A549 (cell line): ENCODE measurements at regions of chr5 and their contacts with region 1.

Region 1: GRCh38 chr5:73792687-73793320 is 166.8 kb downstream of the ARHGEF28 start:
- DNase-seq: peak; percentile 43 to 81
- ATAC-seq: peak; percentile 54 to 73
- H3K4me3 ChIP-seq: no peak overlapping the region
- H3K27ac ChIP-seq: peak overlapping the region; percentile 91 to 94; a peak in 5 of 6 replicates
- H3K4me1 ChIP-seq: peaks cover 73% of the 10 kb centered on the region
- CTCF ChIP-seq: peak; percentile 97
- EP300 ChIP-seq: no peak
- POLR2A ChIP-seq: no peak
- RAD21 ChIP-seq: peak; percentile 99

Region 2: GRCh38 chr5:73519531-73520283 is 273.1 kb before region 1 on chr5:
- CTCF ChIA-PET with region 1: interaction called, 12 read pairs
- POLR2A ChIA-PET with region 1: no interaction called
- DNase-seq: peak; percentile 86 to 93
- ATAC-seq: peak; percentile 99 to 100
- H3K4me3 ChIP-seq: no peak overlapping the region
- H3K27ac ChIP-seq: 0 out of 6 replicates have a peak overlapping the region, but pooled peaks of 1 of the 2 experiments have one; percentile 10
- H3K4me1 ChIP-seq: no peaks in the 10 kb centered on the region; the same call in 2 of the 3 replicates
- CTCF ChIP-seq: peak; percentile 81
- EP300 ChIP-seq: no peak
- POLR2A ChIP-seq: no peak
- RAD21 ChIP-seq: peak; percentile 87 to 93

Region 3: GRCh38 chr5:73558950-73559349 is 233.9 kb before region 1 on chr5:
- CTCF ChIA-PET with region 1: interaction called, 13 read pairs
- POLR2A ChIA-PET with region 1: no interaction called
- DNase-seq: peak; percentile 47 to 51
- ATAC-seq: peak; percentile 79 to 83; a peak in 4 of 6 replicates
- H3K4me3 ChIP-seq: no peak overlapping the region
- H3K27ac ChIP-seq: no peak overlapping the region
- H3K4me1 ChIP-seq: peaks cover 2% of the 10 kb centered on the region; the same call in 1 of the 3 replicates
- CTCF ChIP-seq: peak; percentile 24; the same call in 2 of the 3 replicates
- EP300 ChIP-seq: no peak
- POLR2A ChIP-seq: no peak
- RAD21 ChIP-seq: peak; percentile 33 to 49; a peak in 3 of 5 replicates

Region 4: DNA sequence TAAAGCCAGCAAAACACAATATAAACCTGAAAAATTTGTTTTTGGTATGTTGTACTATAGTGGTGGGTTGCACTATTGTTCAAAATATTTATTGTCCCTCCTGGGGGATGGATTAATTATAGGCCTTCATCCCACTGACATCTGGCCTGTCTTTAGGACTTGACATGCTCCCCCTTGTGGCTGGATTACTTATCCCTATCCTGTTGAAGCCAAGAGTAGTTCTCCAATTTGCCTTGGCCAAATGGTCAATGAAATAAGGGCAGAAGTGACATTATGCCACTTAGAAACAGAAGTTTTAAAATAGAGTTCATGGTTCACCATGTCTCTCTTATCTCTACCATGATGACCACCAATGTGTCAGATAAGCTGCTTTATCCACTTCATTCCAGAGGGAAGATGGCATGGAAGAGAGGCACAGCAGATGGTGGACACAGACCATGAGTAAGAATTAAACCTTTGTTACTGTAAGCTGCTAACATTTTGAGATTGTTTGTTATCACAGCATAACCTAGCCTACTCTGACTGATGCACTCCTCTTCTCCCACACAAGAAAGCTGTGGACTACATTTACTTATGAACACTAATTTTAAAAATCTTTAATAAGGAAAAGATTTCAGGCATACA is 196.0 kb before region 1 on chr5:
- CTCF ChIA-PET with region 1: interaction called, 315 read pairs
- POLR2A ChIA-PET with region 1: interaction called, 5 read pairs
- DNase-seq: peak; percentile 40 to 78
- ATAC-seq: peak; percentile 80 to 92; a peak in 5 of 6 replicates
- H3K4me3 ChIP-seq: no peak overlapping the region
- H3K27ac ChIP-seq: no peak overlapping the region
- H3K4me1 ChIP-seq: peaks cover 23% of the 10 kb centered on the region
- CTCF ChIP-seq: peak; percentile 68
- EP300 ChIP-seq: no peak
- POLR2A ChIP-seq: no peak
- RAD21 ChIP-seq: peak; percentile 41 to 53; a peak in 4 of 5 replicates

Region 5: DNA sequence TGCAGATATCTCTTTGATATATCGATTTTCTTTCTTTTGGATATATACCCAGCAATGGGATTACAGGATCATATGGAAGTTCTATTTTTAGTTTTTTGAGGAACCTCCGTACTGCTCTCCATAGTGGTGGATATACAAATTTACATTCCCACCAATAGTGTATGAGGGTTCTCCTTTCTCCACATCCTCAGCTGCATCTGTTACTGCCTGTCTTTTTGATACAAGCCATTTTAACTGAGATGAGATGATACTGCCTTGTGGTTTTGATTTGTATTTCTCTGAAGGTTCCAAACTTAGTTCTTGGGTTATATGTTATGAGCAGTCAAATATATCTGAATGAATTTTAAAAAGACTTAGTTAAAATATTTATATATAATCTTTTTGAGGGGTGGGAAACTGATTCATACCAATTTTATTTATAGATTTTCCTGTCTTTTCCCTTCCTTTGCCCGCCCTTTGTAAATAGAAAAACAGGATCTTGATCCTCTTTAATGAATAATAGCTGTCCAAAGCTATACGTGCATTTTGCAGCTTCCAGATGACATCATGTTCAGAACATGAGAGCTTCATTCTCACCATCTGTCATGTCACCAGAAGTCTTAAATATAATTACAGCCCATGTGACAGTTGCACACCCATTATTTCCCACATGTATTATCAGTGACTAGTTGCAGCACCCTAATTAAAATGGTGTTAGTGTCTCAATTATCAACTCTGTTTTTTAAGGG is 173.0 kb before region 1 on chr5:
- CTCF ChIA-PET with region 1: interaction called, 10 read pairs
- POLR2A ChIA-PET with region 1: no interaction called
- DNase-seq: no peak
- ATAC-seq: no peak
- H3K4me3 ChIP-seq: no peak overlapping the region
- H3K27ac ChIP-seq: no peak overlapping the region
- H3K4me1 ChIP-seq: peaks cover 43% of the 10 kb centered on the region
- CTCF ChIP-seq: no peak
- EP300 ChIP-seq: no peak
- POLR2A ChIP-seq: no peak
- RAD21 ChIP-seq: no peak

Region 6: DNA sequence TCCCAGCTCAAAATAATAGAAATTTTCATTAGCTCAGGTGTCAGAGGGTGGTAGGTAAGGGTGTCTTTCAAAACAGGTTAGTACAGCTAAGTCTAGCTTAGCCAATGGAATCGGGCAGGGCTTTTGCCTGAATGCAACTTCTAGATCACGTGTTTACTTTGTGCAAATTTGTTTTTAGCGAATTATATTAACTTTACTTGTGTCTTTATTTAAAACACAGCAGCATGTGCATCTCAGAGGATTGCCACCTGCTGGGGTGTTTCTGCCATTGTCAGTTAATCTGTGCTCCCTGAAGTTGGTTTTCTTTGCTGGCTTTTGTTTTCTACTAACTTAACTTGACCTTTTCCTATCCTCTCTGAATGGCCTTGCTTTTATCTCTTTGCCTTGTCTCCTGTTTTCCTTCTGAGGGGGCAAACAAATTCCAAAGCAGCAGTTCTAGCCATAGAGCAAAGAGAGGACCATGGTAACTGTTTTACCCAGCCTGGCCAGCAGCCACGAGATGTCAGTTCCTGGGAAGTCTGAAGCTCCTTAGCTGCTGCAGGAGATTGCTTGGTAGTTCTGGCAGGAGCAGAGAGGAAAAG is 99.2 kb before region 1 on chr5:
- CTCF ChIA-PET with region 1: interaction called, 29 read pairs
- POLR2A ChIA-PET with region 1: no interaction called
- DNase-seq: peak; percentile 40 to 50
- ATAC-seq: peak; percentile 54 to 75; a peak in 4 of 6 replicates
- H3K4me3 ChIP-seq: no peak overlapping the region
- H3K27ac ChIP-seq: peak overlapping the region; percentile 78 to 89
- H3K4me1 ChIP-seq: peaks cover 64% of the 10 kb centered on the region
- CTCF ChIP-seq: peak; percentile 73
- EP300 ChIP-seq: no peak
- POLR2A ChIP-seq: no peak
- RAD21 ChIP-seq: peak; percentile 58 to 72

Region 7: DNA sequence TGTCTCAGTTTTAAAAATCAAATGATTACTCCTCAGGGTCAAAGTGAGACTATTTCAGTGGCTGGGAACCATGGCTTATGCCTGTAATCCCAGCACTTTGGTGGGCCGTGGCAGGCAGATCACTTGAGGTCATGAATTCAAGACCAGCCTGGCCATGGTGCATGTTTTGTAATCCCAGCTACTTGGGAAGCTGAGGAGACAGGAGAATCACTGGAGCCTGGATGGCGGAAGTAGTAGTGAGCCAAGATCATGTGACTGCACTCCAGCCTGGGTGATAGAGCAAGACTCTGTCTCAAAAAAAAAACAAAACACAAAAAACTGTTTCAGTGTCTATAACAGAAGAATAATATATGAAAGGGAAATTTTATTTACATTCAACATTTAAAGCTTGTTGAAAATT is 16.1 kb after region 1 on chr5:
- CTCF ChIA-PET with region 1: interaction called, 13 read pairs
- POLR2A ChIA-PET with region 1: interaction called, 9 read pairs
- DNase-seq: no peak
- ATAC-seq: no peak
- H3K4me3 ChIP-seq: no peak overlapping the region
- H3K27ac ChIP-seq: 0 out of 6 replicates have a peak overlapping the region, but pooled peaks of 1 of the 2 experiments have one; percentile 20
- H3K4me1 ChIP-seq: peaks cover 10% of the 10 kb centered on the region
- CTCF ChIP-seq: no peak
- EP300 ChIP-seq: no peak
- POLR2A ChIP-seq: no peak
- RAD21 ChIP-seq: no peak